ENCODE measurements at regions of chrX and their contacts with region 1.

Region 1: DNA sequence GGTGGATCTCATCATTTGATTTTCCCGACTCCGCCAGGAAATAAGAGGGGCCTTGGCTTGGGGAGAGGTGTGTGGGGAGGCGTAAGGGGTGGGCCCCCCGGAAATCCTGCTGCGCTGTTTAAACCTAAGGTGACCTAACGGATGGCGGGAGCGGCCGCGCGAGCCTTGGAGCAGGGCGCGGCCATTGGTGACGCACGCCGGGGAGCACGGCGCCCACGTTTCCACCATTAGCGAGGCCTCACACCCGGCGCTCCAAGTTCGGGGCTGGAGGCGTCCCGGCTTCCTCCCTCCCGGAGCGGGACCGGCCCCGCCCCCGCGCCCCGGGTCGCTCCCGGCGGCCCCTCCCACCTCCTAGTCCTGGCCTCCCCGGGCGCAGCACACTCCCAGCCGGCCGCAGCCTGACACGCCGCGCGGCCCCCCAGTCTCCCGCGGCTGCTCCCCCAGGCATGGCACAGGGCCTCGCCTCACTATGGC is at the start of gene SMS:
- DNase-seq: peak; percentile 23
- H3K4me3 Mint-ChIP-seq: peak within 1 kb of the TSS; percentile 90
- H3K27ac Mint-ChIP-seq: peak within 1 kb of the TSS; percentile 92
- H3K4me1 Mint-ChIP-seq: peaks cover 35% of the 10 kb centered on the region
- H3K27me3 Mint-ChIP-seq: no peaks in the 10 kb centered on the region
- total RNA-seq, gene SMS: 144 and 145 TPM in 2 replicates

Region 2: DNA sequence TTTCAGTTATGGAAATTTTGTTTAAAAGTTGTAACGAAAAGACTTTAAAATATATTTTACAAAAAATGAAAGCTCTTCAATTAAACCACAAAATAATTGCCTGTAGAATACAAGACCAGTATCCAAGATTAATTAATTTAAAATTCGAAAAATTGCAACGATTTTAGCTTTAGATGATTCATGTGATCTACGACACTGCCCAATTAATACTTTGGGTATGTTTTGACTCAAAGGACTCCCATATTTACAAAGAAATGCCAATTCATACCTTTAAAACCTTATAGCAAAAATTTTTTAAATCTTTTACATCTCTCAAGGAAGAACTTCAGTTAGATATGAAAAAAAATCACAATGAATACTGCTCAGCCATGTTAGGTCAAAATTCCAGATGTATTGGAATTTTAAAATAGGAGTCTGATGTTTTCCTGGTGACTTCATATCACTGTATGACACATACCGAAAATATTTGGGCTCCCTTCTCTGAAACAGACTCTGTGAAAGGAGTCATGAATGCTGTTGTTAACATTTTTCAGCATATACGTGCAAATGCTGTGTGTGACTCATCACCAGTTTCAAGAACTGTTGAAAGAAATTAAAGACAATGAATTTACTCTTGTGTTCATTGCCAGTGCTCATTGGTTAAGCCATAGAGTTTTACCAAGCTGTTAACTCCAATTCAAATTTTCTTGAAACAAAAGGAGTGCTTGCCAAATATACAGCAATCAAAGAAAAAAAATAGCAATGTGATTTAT is 13.7 kb before region 1 on chrX:
- intact Hi-C with region 1: loop called (anchors 1 kb)
- DNase-seq: no peak
- H3K4me3 Mint-ChIP-seq: no peak overlapping the region
- H3K27ac Mint-ChIP-seq: peak overlapping the region; percentile 67
- H3K4me1 Mint-ChIP-seq: peaks cover 35% of the 10 kb centered on the region
- H3K27me3 Mint-ChIP-seq: no peaks in the 10 kb centered on the region

Region 3: DNA sequence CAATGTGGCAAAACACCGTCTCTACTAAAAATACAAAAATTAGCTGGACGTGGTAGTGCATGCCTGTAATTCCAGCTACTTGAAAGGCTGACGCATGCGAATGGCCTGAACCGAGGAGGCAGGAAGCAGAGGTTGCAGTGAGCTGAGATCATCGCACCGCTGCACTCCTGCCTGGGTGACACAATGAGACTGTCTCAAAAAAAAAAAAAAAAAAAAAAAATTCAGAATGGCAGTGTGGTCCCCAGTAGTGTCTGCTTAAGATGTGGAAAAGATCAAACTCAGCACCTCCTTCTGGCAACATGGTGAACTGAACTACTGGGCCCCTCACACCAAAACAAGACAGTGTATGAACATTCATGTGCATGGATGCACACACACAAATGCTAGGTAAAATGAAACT is 32.3 kb after region 1 on chrX:
- intact Hi-C with region 1: loop called (anchors 1 kb)
- DNase-seq: peak; percentile 20
- H3K4me3 Mint-ChIP-seq: peak overlapping the region; percentile 72
- H3K27ac Mint-ChIP-seq: peak overlapping the region; percentile 90
- H3K4me1 Mint-ChIP-seq: peaks cover 45% of the 10 kb centered on the region
- H3K27me3 Mint-ChIP-seq: no peaks in the 10 kb centered on the region